ENCODE measurements at regions of chr7 and their contacts with region 1.

Region 1: GRCh38 chr7:17301471-17302456 is 3.3 kb downstream of the AHR start:
- DNase-seq: no peak

Region 2: DNA sequence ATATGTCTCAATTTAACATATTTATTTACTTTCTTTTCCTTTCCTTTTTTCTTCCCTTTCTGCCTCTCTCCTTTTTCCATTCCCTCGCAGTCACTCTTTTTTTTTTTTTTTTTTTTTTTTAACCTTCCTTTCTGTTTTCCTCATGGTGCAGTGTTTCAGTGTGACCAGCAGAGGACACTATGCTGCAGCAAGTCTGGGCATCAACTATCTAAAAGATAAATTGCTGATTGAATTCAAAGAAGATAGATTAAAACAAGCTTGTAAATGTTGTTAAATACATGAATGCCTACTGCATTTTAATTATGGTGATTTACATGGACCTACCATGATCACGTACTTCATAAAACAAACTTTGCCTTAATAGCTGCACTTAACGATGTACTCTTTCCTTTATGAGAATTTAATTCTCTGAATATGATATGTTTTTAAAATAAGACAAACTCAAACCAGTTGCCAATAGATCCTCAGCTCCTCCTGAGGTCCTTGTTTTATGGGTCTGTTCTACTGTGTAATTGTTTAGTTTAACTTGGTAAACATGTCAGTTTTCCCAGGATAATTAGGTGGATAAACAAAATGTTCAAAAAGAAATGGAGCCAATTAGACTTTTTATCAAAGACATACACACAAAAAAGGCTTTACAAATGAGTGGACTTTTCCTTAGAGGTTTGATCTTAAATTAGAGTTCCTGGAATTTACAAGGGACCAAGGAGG is 319.0 kb before region 1 on chr7:
- intact Hi-C with region 1: loop called in 1 of 2 experiments (anchors 10 kb)
- DNase-seq: no peak

Region 3: DNA sequence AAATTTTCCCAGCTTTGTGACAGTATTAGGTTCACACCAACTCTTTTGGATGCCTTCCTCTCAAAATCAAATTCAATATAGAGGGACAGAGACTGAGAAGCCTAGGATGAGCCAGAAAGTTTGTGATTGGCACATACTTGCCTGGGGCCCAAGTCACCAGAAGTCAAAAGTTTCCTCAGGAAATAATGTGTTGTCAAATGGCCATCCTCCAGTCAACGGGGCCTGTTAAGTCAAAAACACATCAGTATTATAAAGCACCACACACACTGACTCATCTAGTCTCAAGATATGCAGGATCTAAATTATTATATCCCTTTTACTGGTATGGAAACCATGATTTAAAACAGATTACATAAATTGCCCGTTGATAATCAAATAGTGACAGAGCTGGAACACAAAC is 154.8 kb after region 1 on chr7:
- intact Hi-C with region 1: loop called in 1 of 2 experiments (anchors 10 kb)
- DNase-seq: no peak

Region 4: GRCh38 chr7:17633099-17633498 is 331.3 kb after region 1 on chr7:
- intact Hi-C with region 1: loop called in 1 of 2 experiments (anchors 10 kb)
- DNase-seq: no peak

Region 5: GRCh38 chr7:17640730-17641377 is 339.1 kb after region 1 on chr7:
- intact Hi-C with region 1: loop called (anchors 10 kb)
- DNase-seq: no peak

Measured in posterior vena cava (tissue), 2 donors.